Activated CD4-positive, alpha-beta memory T cell treated with anti-CD3 and anti-CD28 coated beads for 36 hours (primary cell): ENCODE measurements at regions of chr17 and their contacts with region 1.

Region 1: DNA sequence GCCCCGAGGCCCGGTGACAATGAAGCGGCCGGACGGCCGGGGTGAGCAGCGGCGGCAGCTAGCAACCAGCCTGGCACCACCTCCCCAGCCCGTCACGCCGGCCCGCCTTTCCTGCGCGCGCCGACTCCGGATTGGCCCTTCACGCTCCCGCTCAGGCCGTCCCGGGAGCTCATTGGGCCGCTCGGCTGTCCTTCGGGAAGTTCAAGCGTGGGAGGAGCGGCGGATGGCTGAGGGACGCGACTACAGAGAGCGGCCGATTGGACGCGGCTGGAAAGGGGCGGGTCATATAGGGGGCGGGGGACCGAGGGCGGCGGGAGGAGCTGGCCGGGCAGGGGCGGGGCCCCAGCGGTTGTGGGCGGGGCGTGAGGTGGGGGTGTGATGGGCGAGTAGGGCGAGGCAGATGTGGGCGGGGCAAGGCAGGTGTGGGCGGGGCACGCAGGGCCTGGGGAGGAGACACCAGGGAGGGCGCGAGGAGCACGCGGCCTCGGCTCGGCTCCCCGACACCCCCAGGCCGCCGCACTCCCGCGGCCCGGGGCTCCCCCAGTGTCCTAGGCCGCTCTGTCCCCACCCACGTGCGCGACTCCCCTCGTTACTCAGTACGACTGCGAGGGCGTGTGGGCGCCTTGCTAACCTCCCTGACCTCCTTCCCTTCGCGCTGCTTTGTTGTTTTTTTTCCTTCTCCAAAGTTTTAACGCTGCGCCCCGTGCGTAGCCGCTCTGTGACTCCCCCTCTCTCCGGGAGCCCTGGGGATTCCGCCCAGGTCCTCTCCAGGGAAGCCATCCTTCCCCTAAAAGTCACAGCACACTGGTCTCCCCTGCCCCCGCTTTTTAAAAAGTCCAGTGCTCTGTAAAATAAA is at the start of gene CEP131:
- DNase-seq: peak; percentile 100
- H3K4me3 Mint-ChIP-seq: peak within 1 kb of the TSS; percentile 66
- H3K27ac Mint-ChIP-seq: no peak within 1 kb of the TSS
- H3K4me1 Mint-ChIP-seq: peaks cover 22% of the 10 kb centered on the region
- H3K27me3 Mint-ChIP-seq: no peaks in the 10 kb centered on the region
- total RNA-seq, gene CEP131: 11.1 to 11.3 TPM

Region 2: GRCh38 chr17:81034779-81035388 is 188.2 kb before region 1 on chr17 and contains the start of gene BAIAP2:
- CTCF ChIA-PET with region 1: no interaction called
- POLR2A ChIA-PET with region 1: no interaction called
- intact Hi-C with region 1: loop called (anchors 10 kb)
- DNase-seq: peak; percentile 96
- H3K4me3 Mint-ChIP-seq: peak within 1 kb of the TSS; percentile 79
- H3K27ac Mint-ChIP-seq: no peak within 1 kb of the TSS
- H3K4me1 Mint-ChIP-seq: peaks cover 10% of the 10 kb centered on the region
- H3K27me3 Mint-ChIP-seq: peaks cover 13% of the 10 kb centered on the region
- total RNA-seq, gene BAIAP2: 3.3 to 3.6 TPM

Region 3: GRCh38 chr17:81135503-81136278 is 87.4 kb before region 1 on chr17:
- CTCF ChIA-PET with region 1: no interaction called
- POLR2A ChIA-PET with region 1: no interaction called
- intact Hi-C with region 1: no loop called
- DNase-seq: no peak
- H3K4me3 Mint-ChIP-seq: no peak overlapping the region
- H3K27ac Mint-ChIP-seq: no peak overlapping the region
- H3K4me1 Mint-ChIP-seq: no peaks in the 10 kb centered on the region
- H3K27me3 Mint-ChIP-seq: peaks cover 2% of the 10 kb centered on the region

Region 4: GRCh38 chr17:81238817-81239600 is 15.9 kb after region 1 on chr17 and contains the starts of genes NDUFAF8 and TEPSIN:
- CTCF ChIA-PET with region 1: interaction called, 6 read pairs
- POLR2A ChIA-PET with region 1: interaction called, 16 read pairs
- intact Hi-C with region 1: loop called (anchors 1 kb)
- DNase-seq: peak; percentile 98
- H3K4me3 Mint-ChIP-seq: peak within 1 kb of the TSS; percentile 96
- H3K27ac Mint-ChIP-seq: peak within 1 kb of the TSS; percentile 92
- H3K4me1 Mint-ChIP-seq: peaks cover 28% of the 10 kb centered on the region
- H3K27me3 Mint-ChIP-seq: no peaks in the 10 kb centered on the region
- total RNA-seq, gene NDUFAF8: 49.8 to 55.9 TPM
- total RNA-seq, gene TEPSIN: 20.0 to 24.6 TPM

Region 5: GRCh38 chr17:81346090-81346907 is 123.2 kb after region 1 on chr17:
- CTCF ChIA-PET with region 1: no interaction called
- POLR2A ChIA-PET with region 1: no interaction called
- intact Hi-C with region 1: no loop called
- DNase-seq: peak; percentile 96
- H3K4me3 Mint-ChIP-seq: peak overlapping the region; percentile 37
- H3K27ac Mint-ChIP-seq: no peak overlapping the region
- H3K4me1 Mint-ChIP-seq: peaks cover 21% of the 10 kb centered on the region
- H3K27me3 Mint-ChIP-seq: peaks cover 23% of the 10 kb centered on the region